ENCODE measurements at regions of chr6 and their contacts with region 1.

Region 1: DNA sequence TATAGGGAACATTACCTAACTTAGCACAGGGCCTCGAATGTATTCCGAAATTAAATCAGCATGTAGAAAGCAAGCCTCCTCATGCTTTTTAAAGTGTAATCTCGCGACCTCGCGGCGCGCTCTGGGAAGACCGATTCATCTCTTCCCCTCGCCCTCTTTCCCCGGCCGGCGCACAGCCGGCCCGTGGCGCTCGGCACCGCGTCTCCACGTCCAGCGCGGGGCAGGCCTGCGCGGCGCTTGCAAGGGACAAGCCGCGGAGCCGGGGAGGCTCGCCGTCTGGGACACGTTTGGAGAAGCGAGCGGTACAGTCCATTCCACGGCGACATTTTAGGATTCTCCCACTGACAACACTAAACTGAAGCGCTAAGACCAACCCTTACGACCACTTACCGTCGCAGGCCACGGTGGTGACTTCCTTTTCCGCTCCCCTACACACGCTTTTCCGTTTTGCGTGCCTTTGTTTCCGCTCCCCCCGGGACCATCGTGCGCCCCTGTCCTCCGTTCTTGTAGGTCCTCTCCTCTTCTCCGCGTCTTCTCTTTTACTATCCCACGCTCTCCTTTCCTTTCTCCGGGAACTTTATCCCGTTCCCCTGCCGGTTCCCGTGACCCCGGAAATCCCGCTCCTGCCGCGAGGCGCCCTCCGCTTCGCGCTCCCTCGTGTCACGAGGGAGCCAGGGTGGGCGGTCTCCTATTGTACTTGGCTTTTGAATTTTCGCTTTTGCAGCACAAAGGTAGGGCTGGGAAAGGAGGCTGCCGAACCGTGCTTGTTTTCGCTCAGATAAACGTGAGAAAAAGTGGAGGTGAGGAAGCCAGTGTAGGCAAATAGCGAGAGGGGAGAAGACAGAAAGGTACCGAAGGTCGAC is at the start of gene ECHDC1:
- DNase-seq: peak in 1 of 2 donors; percentile 75
- H3K4me3 ChIP-seq: peak within 1 kb of the TSS; percentile 76 to 81
- H3K27ac ChIP-seq: peak within 1 kb of the TSS; percentile 59 to 66
- H3K4me1 ChIP-seq: peaks cover 0 to 16% of the 10 kb centered on the region in 2 donors
- H3K27me3 ChIP-seq: no peaks in the 10 kb centered on the region
- CTCF ChIP-seq: peak in 1 of 3 experiments; percentile 27
- total RNA-seq, gene ECHDC1: 3.3 TPM

Region 2: GRCh38 chr6:127302728-127303660 is 40.2 kb before region 1 on chr6:
- intact Hi-C with region 1: no loop called
- DNase-seq: no peak
- H3K4me3 ChIP-seq: no peak overlapping the region
- H3K27ac ChIP-seq: no peak overlapping the region
- H3K4me1 ChIP-seq: peaks cover 0 to 13% of the 10 kb centered on the region in 2 donors
- H3K27me3 ChIP-seq: no peaks in the 10 kb centered on the region
- CTCF ChIP-seq: peak; percentile 44 to 73 (median 52)

Region 3: DNA sequence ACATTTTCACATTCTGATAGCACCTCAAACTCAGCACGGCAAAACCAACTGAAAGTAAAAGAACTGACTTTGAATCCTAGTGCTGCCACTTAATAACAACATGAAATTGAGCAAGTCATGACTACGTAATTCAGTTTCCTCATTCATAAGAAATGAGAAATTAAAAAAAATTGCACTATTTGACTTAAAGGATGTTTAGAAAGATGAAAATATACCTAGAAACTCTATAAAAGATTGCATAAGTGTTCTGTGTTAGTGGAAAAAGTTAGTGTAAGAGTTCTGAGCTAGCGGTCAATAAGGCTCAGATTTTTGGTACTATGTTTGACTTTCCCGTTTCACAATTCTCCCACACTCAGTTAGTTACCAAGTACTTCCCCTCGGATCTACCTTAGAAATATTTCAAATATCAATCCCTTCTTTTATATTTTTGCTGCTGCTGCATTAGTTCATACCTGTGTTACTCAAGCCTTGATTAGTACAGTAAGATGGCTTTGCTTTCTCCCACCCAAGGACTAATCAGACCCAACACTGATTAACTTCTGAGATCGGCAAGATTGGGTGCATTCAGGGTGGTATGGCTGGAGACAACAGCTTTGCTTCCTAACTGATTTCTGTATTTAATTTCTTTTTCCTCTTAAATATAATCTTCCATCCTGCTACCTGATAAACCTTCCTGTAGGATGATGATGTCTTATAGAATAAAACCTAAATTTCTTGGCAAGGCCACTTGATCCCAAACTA is 25.6 kb before region 1 on chr6:
- intact Hi-C with region 1: no loop called
- DNase-seq: no peak
- H3K4me3 ChIP-seq: no peak overlapping the region
- H3K27ac ChIP-seq: no peak overlapping the region
- H3K4me1 ChIP-seq: no peaks in the 10 kb centered on the region
- H3K27me3 ChIP-seq: no peaks in the 10 kb centered on the region
- CTCF ChIP-seq: no peak

Region 4: DNA sequence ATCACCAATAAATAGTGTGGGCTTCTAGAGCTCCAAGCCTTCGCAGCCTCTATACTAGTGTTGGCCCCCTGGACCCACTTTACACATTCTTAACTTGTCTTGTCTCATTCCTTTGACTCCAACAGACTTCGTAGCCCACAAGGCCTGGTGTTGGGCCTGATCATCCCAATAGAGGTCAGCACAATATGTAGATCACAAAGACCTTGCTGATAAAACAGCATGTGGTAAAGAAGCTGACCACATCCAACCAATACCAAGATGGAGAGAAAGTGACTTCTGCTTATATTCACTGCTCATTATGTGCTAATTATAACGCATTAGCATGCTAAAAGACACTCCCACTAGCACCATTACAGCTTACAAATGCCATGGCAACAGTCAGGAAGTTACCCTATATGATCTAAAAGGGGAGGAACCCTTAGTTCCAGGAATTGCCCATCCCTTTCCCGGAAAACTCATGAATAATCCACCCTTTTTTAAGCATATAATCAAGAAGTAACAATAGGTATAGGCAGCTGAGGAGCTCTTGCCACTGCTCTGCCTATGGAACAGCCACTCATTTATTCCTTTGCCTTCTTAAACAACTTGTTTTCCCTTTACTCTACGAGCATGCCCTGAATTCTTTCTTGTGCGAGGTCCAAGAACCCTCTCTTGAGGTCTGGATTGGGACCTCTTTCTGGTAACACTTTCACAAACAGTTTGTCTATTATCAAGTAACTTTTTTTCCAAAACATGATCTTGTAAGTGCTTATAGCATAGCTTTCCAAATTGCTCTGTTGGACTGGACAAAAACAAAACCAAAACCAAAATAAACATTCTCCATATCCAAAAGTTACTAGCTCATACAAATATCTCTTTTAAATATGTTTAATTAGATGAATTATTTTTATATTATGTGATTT is 54.8 kb after region 1 on chr6:
- intact Hi-C with region 1: loop called (anchors 5 kb)
- DNase-seq: no peak
- H3K4me3 ChIP-seq: no peak overlapping the region
- H3K27ac ChIP-seq: no peak overlapping the region
- H3K4me1 ChIP-seq: peaks cover 0 to 3% of the 10 kb centered on the region in 2 donors
- H3K27me3 ChIP-seq: no peaks in the 10 kb centered on the region
- CTCF ChIP-seq: no peak

Region 5: DNA sequence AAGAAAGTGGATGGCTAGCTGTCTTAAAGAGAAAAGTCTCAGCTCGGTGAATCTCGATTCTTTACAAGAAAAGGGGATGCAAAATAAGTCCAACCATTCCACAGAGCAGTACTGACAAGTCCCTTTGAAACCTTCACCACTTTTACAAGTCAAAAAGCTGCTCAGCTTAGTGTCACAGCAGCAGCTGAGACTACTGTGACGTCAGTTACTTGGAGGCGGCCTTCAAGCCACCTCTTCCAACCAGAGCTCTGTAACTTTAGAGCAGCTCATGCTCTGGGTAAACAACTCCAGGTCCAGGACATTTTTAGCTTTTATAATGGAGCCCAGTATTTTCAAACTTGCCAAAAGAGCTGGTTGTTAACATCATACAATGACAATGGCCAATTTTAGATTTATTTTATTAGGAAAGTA is 116.1 kb after region 1 on chr6 and contains the start of gene KIAA0408:
- intact Hi-C with region 1: loop called (anchors 2 kb)
- DNase-seq: peak in 1 of 2 donors; percentile 88
- H3K4me3 ChIP-seq: peak within 1 kb of the TSS; percentile 40 to 55
- H3K27ac ChIP-seq: peak within 1 kb of the TSS; percentile 65 to 79
- H3K4me1 ChIP-seq: peaks cover 0 to 4% of the 10 kb centered on the region in 2 donors
- H3K27me3 ChIP-seq: no peaks in the 10 kb centered on the region
- CTCF ChIP-seq: no peak
- total RNA-seq, gene KIAA0408: not detected